HepG2 (cell line): ENCODE measurements at regions of chrX and their contacts with region 1.

Region 1: DNA sequence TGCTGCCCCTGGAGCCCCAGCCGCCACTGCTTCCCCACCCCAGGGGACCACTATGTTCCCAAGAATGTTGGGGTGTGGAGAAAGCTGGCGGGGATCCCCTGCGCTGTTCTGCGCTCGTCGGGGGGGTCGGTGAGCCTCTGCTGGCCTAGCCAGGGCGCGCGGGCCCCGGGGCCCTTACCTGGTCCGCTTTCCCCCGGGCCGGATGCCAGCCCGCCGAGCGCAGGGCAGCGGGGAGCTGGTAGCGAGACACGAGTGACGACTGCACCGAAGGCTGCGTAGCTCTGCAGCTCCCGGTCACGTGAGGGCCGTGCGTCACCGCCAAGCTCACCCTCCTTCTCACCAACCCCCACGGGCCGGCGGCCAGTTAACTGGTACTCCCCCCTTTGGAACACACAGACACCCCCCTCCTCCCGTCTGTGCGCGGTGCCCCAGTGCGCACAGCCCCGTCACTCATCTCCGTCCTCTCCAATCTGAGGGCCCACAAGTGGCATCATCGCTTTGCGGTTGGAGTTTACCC is at the start of gene BEX1:
- DNase-seq: peak; percentile 35
- ATAC-seq: peak; percentile 93
- H3K4me3 ChIP-seq: peak within 1 kb of the TSS; percentile 40 to 64 (median 57); a peak in 5 of 6 replicates
- H3K27ac ChIP-seq: peak within 1 kb of the TSS; percentile 46
- H3K4me1 ChIP-seq: no peaks in the 10 kb centered on the region
- H3K27me3 ChIP-seq: no peaks in the 10 kb centered on the region
- CTCF ChIP-seq: no peak
- EP300 ChIP-seq: no peak
- POLR2A ChIP-seq: peak; percentile 39 to 47; a peak in 2 of 4 replicates
- RAD21 ChIP-seq: no peak
- total RNA-seq, gene BEX1: 69.4 and 85.8 TPM in 2 replicates

Region 2: GRCh38 chrX:102995316-102995715 is 68.7 kb before region 1 on chrX:
- CTCF ChIA-PET with region 1: no interaction called
- POLR2A ChIA-PET with region 1: no interaction called
- in situ Hi-C with region 1: no loop called
- intact Hi-C with region 1: loop called (anchors 2 kb)
- DNase-seq: no peak
- ATAC-seq: no peak
- H3K4me3 ChIP-seq: no peak overlapping the region
- H3K27ac ChIP-seq: no peak overlapping the region
- H3K4me1 ChIP-seq: no peaks in the 10 kb centered on the region
- H3K27me3 ChIP-seq: no peaks in the 10 kb centered on the region
- CTCF ChIP-seq: no peak
- EP300 ChIP-seq: no peak
- POLR2A ChIP-seq: no peak
- RAD21 ChIP-seq: no peak

Region 3: GRCh38 chrX:103092942-103093341 is 29.0 kb after region 1 on chrX and contains the start of gene NXF3:
- CTCF ChIA-PET with region 1: no interaction called
- POLR2A ChIA-PET with region 1: no interaction called
- in situ Hi-C with region 1: no loop called
- intact Hi-C with region 1: no loop called
- DNase-seq: no peak
- ATAC-seq: no peak
- H3K4me3 ChIP-seq: no peak within 1 kb of the TSS
- H3K27ac ChIP-seq: no peak within 1 kb of the TSS
- H3K4me1 ChIP-seq: no peaks in the 10 kb centered on the region
- H3K27me3 ChIP-seq: no peaks in the 10 kb centered on the region
- CTCF ChIP-seq: no peak
- EP300 ChIP-seq: no peak
- POLR2A ChIP-seq: no peak
- RAD21 ChIP-seq: no peak
- total RNA-seq, gene NXF3: not detected in 2 replicates

Region 4: DNA sequence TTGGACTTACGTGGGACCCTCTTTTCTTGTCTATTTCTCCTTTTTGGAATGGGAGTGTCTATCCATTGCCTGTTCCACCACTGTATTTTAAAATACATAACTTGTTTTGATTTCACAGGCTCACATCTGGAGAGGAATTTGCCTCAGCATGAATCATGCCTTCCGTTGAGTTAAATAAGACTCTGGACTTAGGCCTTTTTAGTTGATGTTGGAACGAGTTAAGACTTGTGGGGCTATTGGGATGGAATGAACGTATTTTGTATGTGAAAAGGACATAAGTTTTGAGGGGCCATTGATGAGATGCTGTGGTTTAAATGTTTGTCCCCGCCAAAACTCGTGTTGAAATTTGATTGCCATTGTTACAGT is 378.5 kb after region 1 on chrX:
- CTCF ChIA-PET with region 1: no interaction called
- POLR2A ChIA-PET with region 1: no interaction called
- in situ Hi-C with region 1: no loop called
- intact Hi-C with region 1: no loop called
- DNase-seq: no peak
- ATAC-seq: no peak
- H3K4me3 ChIP-seq: no peak overlapping the region
- H3K27ac ChIP-seq: no peak overlapping the region
- H3K4me1 ChIP-seq: no peaks in the 10 kb centered on the region
- H3K27me3 ChIP-seq: no peaks in the 10 kb centered on the region
- CTCF ChIP-seq: no peak
- EP300 ChIP-seq: no peak
- POLR2A ChIP-seq: no peak
- RAD21 ChIP-seq: no peak